ENCODE measurements at regions of chr14 and their contacts with region 1.

Region 1: DNA sequence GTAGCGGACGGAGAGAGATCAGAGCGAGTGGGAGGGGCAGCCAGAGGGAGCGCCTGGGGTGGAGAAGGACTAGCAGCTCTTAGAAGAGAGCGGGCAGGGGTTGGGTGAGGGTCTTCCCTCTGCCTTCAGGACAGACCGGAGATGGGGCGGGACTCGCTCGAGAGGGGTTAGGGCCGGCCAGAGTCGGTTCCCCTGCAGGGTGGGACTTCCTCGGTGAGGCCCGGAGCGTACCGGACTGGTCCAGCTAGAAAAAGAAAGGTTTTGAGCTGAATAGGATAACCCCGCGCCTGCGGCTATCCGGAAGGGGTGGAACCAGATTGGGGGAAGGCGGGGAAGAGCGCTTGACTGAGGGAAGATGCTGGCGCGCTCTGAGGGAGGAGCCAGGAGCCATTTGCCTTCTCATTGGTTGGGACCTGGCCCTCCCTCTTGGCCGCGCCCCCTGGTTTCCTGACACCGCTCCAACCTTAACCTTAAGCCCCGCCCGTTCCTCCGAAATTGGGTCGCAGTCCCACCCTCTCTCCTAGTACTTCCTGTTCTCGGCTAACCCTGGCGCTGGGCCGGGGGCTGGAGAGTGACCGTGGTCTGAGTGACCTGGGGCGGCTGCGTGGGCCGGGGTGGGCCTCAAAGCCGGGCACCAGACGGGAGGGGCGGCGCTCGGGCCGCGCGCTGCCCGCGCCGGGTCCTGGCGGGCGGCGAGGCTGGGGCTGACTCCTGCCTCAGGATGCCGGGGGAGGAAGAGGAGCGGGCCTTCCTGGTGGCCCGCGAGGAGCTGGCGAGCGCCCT is at the start of gene RNF31:
- DNase-seq: peak; percentile 97
- H3K4me3 Mint-ChIP-seq: peak within 1 kb of the TSS; percentile 94
- H3K27ac Mint-ChIP-seq: peak within 1 kb of the TSS; percentile 98
- H3K4me1 Mint-ChIP-seq: peaks cover 62% of the 10 kb centered on the region
- H3K27me3 Mint-ChIP-seq: no peaks in the 10 kb centered on the region
- total RNA-seq, gene RNF31: 115 and 129 TPM in 2 replicates

Region 2: DNA sequence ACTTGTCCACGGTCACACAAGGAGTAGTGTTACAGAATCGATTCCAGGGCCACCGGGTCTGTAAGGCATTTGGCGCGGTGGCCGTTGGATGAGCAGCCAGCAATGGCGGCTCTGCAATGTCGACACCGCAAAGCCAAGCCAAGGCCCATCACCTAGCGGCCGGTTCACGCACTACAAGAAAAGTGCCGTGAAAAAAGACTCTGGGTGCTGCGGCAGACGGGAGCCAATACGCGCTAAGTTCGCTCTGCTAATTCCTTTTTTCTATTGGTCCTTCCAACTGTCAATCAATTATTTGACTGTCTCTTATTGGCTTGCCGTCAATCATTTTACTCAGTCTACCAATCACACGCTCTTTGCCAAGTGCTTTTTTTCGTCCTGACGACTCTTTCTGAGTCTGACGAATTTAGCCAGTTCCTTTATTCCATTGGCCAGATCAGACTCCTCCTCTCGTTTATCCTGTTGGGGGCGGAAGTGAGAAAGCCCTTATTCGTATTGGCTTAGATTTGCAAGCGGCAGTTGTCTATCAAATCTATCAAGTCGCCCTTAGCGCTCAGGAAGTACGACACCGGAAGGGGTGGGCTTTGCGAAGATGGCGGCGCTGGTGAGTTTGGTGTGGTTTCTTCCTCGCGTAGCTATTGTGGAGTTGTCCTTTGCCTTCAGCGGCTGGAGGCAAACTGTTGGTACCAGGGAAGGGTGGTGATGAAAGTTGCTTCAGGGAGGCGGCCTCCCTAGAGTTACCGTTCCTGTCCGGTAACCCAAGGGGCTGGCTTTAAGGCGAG is 677.9 kb before region 1 on chr14 and contains the start of gene NGDN:
- intact Hi-C with region 1: loop called (anchors 5 kb)
- DNase-seq: peak; percentile 89
- H3K4me3 Mint-ChIP-seq: no peak within 1 kb of the TSS
- H3K27ac Mint-ChIP-seq: peak within 1 kb of the TSS; percentile 45
- H3K4me1 Mint-ChIP-seq: peaks cover 11% of the 10 kb centered on the region
- H3K27me3 Mint-ChIP-seq: peaks cover 2% of the 10 kb centered on the region
- total RNA-seq, gene NGDN: 80.1 and 84.5 TPM in 2 replicates

Region 3: GRCh38 chr14:23861666-23862065 is 285.5 kb before region 1 on chr14:
- intact Hi-C with region 1: no loop called
- DNase-seq: no peak
- H3K4me3 Mint-ChIP-seq: no peak overlapping the region
- H3K27ac Mint-ChIP-seq: no peak overlapping the region
- H3K4me1 Mint-ChIP-seq: no peaks in the 10 kb centered on the region
- H3K27me3 Mint-ChIP-seq: peaks cover 3% of the 10 kb centered on the region

Region 4: DNA sequence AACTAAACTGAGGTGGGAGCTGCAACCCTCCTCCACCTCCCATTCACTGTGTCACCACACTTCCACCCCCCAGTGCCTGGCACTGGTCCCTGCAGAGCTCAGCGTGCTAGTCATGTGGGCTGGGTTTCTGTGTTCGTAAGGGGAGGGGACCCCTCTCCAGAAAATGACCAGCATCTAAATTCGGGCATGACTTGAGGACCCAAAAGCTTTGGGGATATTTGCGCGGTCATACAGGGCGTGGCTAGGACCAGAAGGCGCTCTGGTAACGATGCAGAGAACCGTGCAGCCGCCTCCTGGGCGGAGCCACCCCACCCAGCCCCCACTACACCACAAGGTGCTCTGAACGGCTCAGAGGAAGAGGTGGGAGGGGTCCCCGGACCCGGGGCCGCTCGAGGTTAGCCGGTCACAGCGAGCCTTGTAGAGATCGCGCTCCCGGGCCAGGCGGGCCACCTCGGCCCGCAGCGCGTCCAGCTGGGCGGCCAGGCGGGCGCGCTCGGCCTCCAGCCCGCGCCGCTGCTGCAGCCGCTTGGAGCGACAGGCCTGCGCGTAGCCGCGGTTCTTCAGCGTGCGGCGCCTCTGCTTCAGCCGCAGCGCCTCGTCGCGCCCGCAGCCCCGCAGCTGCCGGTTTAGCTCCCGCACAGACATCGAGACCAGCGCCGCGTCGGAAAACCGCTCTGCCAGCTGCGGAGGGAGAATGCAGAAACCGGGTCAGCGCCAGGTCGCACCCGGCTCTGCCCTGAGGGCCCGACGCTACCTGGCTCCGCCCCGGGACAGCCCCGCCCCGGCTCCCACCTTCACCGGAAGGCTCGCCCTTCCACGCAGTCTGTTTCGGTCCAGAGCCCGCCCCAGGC is 66.1 kb before region 1 on chr14:
- intact Hi-C with region 1: loop called (anchors 2 kb)
- DNase-seq: peak; percentile 71
- H3K4me3 Mint-ChIP-seq: peak overlapping the region; percentile 81
- H3K27ac Mint-ChIP-seq: peak overlapping the region; percentile 50
- H3K4me1 Mint-ChIP-seq: peaks cover 17% of the 10 kb centered on the region
- H3K27me3 Mint-ChIP-seq: peaks cover 8% of the 10 kb centered on the region

Region 5: DNA sequence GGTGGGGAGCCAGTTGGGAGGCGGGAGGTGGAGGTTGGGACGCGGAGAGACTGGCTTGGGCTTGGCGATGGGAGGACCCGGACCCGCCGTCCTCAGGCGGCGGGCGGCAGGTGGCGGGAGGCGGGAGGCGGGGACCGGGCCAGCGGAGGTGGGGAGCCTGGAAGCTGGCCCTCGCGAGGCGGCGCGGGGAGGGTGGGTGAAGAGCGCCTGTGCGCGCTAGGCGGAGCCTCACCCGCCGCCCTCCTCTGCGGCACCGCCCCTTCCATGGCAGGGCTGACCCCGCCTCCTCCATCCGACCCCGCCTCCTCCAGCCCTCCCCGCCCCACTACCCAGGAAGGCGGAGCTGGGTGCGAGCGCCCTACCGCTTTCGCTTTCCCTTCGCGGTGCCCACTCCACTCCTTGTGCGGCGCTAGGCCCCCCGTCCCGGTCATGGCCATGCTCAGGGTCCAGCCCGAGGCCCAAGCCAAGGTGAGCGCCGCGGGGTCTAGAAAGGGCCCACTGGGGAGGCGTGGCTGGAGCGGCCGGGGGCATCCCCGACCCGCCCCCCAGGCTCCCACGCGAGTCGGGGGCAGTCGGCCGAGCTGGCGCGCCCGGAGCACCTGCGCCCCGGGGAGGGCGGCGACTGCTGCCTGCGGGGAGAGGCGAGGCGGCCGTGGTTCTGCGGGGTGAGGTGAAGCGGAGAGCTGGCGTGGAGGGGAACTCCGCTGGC is 11.2 kb before region 1 on chr14 and contains the start of gene PSME1:
- intact Hi-C with region 1: loop called (anchors 1 kb)
- DNase-seq: peak; percentile 92
- H3K4me3 Mint-ChIP-seq: peak within 1 kb of the TSS; percentile 92
- H3K27ac Mint-ChIP-seq: peak within 1 kb of the TSS; percentile 90
- H3K4me1 Mint-ChIP-seq: peaks cover 64% of the 10 kb centered on the region
- H3K27me3 Mint-ChIP-seq: no peaks in the 10 kb centered on the region
- total RNA-seq, gene PSME1: 291 and 295 TPM in 2 replicates

Region 6: DNA sequence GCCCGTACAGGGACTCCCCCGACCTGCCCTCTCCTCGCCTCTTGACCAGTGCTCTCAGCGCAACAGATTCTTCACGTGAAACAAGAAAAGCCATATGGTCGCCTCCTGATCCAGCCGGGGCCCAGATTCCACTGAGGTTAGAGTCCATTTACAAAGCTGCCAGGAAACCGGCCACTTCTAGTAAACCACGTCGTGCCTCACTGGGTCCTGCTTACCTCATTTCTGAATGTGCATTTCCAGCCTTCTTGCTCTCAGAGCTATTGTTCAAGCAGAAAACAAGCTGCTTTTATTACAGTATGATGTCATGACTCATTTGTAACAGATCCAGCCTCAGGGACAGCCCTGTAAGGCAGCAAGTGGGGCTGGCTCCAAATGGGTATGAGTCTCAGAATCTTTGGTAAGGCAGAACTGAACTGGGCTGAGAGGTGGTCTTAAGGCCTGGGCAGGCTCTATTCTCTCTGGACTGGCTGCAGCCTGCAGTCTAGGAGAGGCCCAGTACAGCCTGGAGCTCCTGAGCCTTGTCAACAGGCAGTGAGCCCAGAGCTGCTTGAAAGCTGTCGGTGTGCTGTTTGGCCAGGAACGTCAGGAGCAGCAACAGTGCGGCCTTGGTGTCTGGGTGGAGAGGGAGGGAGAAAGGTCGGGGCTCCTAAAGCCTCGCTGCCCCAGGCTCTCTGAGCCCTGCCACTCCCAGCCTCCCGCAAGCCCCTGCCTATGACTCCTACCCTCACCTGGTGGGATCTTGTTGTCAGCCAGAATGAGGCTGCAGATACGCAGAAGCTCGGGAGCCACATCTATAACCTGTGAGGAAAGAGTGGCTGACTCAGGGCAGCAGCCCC is 33.0 kb after region 1 on chr14:
- intact Hi-C with region 1: no loop called
- DNase-seq: no peak
- H3K4me3 Mint-ChIP-seq: no peak overlapping the region
- H3K27ac Mint-ChIP-seq: no peak overlapping the region
- H3K4me1 Mint-ChIP-seq: no peaks in the 10 kb centered on the region
- H3K27me3 Mint-ChIP-seq: no peaks in the 10 kb centered on the region

Region 7: DNA sequence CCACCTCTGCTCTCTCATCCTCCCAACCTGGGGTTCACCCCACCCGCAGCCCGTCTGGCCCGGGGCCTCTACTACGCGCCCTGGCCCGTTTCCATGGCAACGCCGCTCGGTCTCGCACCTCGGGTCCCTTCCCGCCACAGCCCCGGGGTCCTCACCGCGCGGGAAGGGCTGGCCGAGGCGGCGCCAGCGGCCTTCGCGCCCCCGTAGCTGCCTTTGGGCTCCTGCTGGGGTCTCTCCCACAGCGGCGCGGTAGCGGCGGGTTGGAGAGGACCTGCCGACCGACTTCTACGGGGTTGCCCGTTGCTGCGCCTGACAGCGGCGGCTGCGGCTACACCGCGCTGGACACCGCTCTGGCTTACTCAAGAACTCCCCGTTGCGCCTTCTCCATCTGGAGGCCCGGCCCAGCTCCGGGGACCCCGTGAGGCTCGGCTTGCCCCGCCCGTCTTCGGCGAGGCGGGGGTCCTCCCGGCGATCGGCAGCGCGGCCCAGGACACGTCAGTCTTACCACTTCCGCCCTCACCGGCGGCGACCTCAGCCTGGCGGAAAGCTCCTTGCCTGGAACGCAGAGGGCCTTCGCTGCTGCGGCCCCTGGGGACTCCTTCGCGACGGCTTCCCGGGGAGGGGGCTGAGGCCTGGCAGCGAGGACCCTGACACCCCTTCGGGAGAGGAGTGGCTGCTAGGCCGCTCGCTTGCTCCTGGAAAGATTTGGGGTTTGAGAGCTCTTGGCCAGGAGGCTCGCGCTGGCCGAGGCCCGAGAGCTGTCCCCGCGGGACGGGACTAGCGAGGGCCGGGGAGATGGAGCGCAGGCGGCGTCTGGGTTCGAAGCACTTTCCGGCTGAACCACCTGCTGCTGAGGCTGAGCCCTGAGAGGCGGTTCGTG is 48.3 kb after region 1 on chr14 and contains the start of gene TM9SF1:
- intact Hi-C with region 1: loop called (anchors 1 kb)
- DNase-seq: peak; percentile 85
- H3K4me3 Mint-ChIP-seq: peak within 1 kb of the TSS; percentile 97
- H3K27ac Mint-ChIP-seq: peak within 1 kb of the TSS; percentile 96
- H3K4me1 Mint-ChIP-seq: peaks cover 61% of the 10 kb centered on the region
- H3K27me3 Mint-ChIP-seq: no peaks in the 10 kb centered on the region
- total RNA-seq, gene TM9SF1: 34.5 and 35.3 TPM in 2 replicates

Region 8: GRCh38 chr14:24232121-24232644 is 85.0 kb after region 1 on chr14 and contains the start of gene NEDD8:
- intact Hi-C with region 1: loop called (anchors 1 kb)
- DNase-seq: peak; percentile 84
- H3K4me3 Mint-ChIP-seq: peak within 1 kb of the TSS; percentile 93
- H3K27ac Mint-ChIP-seq: peak within 1 kb of the TSS; percentile 91
- H3K4me1 Mint-ChIP-seq: peaks cover 50% of the 10 kb centered on the region
- H3K27me3 Mint-ChIP-seq: no peaks in the 10 kb centered on the region
- total RNA-seq, gene NEDD8: 177 and 185 TPM in 2 replicates